Left cardiac atrium (tissue), 4 donors: ENCODE measurements at regions of chr9 and their contacts with region 1.

Region 1: DNA sequence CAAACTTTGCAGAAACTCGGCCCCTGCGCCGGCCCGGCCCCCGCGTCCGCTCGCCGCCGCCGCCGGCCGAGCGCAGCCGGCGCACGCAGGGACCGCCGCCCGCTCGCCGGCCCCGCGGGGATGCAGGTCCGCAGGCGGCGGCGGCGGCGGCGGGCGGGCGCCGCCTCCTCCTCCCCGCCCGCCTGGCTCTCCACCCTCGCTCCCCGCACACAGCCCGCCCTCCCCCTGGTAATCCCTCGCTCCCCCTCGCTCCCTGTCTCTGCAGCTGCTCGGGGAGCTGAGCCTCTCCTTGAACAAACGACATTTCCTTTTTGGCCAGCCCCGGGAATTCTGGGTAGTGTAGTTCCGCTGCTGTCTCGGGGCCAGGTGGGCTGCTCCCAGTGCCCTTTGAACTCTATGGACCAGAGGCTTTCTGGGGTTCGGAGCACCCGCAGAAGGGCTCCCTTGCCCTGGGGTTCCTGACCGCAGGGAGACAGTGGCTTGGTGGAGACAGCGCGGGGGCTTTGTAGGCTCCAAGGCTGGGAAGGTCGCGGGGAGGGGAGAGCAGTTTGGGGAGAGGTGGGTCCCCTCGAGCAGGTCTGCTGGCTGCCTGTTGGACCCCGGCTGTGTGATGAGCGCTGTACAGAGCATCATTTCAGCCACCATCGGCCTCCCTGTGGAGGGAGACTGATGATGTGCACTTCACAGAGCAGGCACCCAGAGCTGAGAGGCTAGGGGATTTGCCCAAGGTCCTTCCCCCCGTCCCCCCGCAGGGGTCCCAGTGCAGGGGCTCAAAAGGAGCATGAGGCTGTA is 1.8 kb upstream of the FAM78A start:
- DNase-seq: peak; percentile 88
- ATAC-seq: peak; percentile 54 to 64

Region 2: GRCh38 chr9:131178382-131178781 is 99.7 kb before region 1 on chr9:
- intact Hi-C with region 1: loop called (anchors 5 to 10 kb)
- DNase-seq: peak; percentile 73
- ATAC-seq: peak; percentile 91 to 93

Region 3: GRCh38 chr9:131320031-131320685 is 42.1 kb after region 1 on chr9:
- intact Hi-C with region 1: no loop called
- DNase-seq: peak; percentile 49
- ATAC-seq: peak; percentile 79 to 81

Region 4: GRCh38 chr9:131513177-131513576 is 235.1 kb after region 1 on chr9:
- intact Hi-C with region 1: no loop called
- DNase-seq: no peak
- ATAC-seq: no peak